ENCODE measurements at regions of chr19 and their contacts with region 1.

Region 1: GRCh38 chr19:45643024-45643926 is 4.1 kb upstream of the EML2 start:
- DNase-seq: peak; percentile 93
- ATAC-seq: peak; percentile 12
- H3K4me3 Mint-ChIP-seq: peak overlapping the region; percentile 54
- H3K27ac Mint-ChIP-seq: peak overlapping the region; percentile 87
- H3K4me1 Mint-ChIP-seq: peaks cover 65% of the 10 kb centered on the region
- H3K27me3 Mint-ChIP-seq: peaks cover 2% of the 10 kb centered on the region

Region 2: GRCh38 chr19:45485305-45486077 is 157.8 kb before region 1 on chr19:
- CTCF ChIA-PET with region 1: interaction called, 17 read pairs
- POLR2A ChIA-PET with region 1: no interaction called
- DNase-seq: peak; percentile 99
- ATAC-seq: peak; percentile 97
- H3K4me3 Mint-ChIP-seq: peak overlapping the region; percentile 86
- H3K27ac Mint-ChIP-seq: peak overlapping the region; percentile 83
- H3K4me1 Mint-ChIP-seq: peaks cover 11% of the 10 kb centered on the region
- H3K27me3 Mint-ChIP-seq: peaks cover 3% of the 10 kb centered on the region

Region 3: DNA sequence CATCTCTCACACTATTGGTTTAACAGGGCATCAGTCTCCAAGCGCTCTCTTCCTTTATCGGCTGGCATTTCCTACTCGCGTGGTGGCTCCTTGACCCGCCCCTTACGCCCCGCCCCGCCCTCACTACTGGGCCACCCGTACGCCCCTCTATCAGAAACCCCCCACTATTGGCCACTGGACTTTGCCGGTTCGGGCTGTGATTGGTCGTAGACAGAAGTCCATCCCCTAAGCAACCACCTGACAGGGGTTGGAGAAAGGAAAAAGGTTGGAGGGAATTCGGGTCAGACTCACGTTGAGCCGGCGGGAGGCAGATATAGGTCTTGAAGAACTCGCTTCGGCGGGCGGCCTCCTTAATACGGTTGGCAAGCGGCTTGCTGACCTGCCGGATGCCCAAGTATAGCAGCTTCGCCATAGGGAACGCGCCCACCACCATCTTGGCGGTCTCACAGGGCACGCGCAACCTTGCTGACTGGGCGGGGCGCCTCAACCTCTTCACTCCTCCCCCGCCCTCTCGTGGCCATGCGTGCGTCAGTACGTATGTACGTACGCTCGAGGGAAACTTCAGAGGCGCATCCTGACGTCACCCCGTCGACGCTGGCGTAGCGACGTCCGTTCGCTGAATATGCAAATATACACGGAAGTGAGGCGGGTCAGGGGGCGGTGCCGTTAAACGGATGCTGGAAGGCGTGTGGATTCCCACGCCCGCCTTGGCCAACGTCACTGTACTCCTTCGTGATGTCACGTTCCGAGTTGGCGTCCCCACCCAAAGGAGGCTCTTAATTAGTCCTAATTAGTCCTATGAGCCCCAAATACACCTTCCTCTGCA is 58.7 kb before region 1 on chr19 and contains the start of gene OPA3:
- CTCF ChIA-PET with region 1: interaction called, 12 read pairs
- POLR2A ChIA-PET with region 1: interaction called, 3 read pairs
- DNase-seq: peak; percentile 100
- ATAC-seq: peak; percentile 96
- H3K4me3 Mint-ChIP-seq: peak within 1 kb of the TSS; percentile 92
- H3K27ac Mint-ChIP-seq: peak within 1 kb of the TSS; percentile 97
- H3K4me1 Mint-ChIP-seq: peaks cover 15% of the 10 kb centered on the region
- H3K27me3 Mint-ChIP-seq: peaks cover 6% of the 10 kb centered on the region
- total RNA-seq, gene OPA3: 13.4 to 14.9 TPM

Region 4: GRCh38 chr19:45607071-45608029 is 35.9 kb before region 1 on chr19:
- CTCF ChIA-PET with region 1: interaction called, 47 read pairs
- POLR2A ChIA-PET with region 1: no interaction called
- DNase-seq: peak; percentile 48
- ATAC-seq: peak; percentile 36
- H3K4me3 Mint-ChIP-seq: no peak overlapping the region
- H3K27ac Mint-ChIP-seq: peak overlapping the region; percentile 77
- H3K4me1 Mint-ChIP-seq: peaks cover 14% of the 10 kb centered on the region
- H3K27me3 Mint-ChIP-seq: peaks cover 9% of the 10 kb centered on the region

Region 5: GRCh38 chr19:45681391-45682015 is 38.2 kb after region 1 on chr19:
- CTCF ChIA-PET with region 1: interaction called, 14 read pairs
- POLR2A ChIA-PET with region 1: interaction called, 3 read pairs
- DNase-seq: peak; percentile 91
- ATAC-seq: peak; percentile 95
- H3K4me3 Mint-ChIP-seq: peak overlapping the region; percentile 64
- H3K27ac Mint-ChIP-seq: peak overlapping the region; percentile 64
- H3K4me1 Mint-ChIP-seq: peaks cover 26% of the 10 kb centered on the region
- H3K27me3 Mint-ChIP-seq: no peaks in the 10 kb centered on the region

Region 6: GRCh38 chr19:45886427-45887199 is 243.3 kb after region 1 on chr19:
- CTCF ChIA-PET with region 1: no interaction called
- POLR2A ChIA-PET with region 1: no interaction called
- DNase-seq: peak; percentile 96
- ATAC-seq: peak; percentile 82
- H3K4me3 Mint-ChIP-seq: peak overlapping the region; percentile 90
- H3K27ac Mint-ChIP-seq: peak overlapping the region; percentile 97
- H3K4me1 Mint-ChIP-seq: peaks cover 29% of the 10 kb centered on the region
- H3K27me3 Mint-ChIP-seq: no peaks in the 10 kb centered on the region

Measured in activated CD8-positive, alpha-beta T cell treated with anti-CD3 and anti-CD28 coated beads, Interleukin-2, amount 10 ng/mL, durations not matched to agents 7 days and 5 days (primary cell).